Naive thymus-derived CD4-positive, alpha-beta T cell (primary cell): ENCODE measurements at regions of chr2 and their contacts with region 1.

Region 1: DNA sequence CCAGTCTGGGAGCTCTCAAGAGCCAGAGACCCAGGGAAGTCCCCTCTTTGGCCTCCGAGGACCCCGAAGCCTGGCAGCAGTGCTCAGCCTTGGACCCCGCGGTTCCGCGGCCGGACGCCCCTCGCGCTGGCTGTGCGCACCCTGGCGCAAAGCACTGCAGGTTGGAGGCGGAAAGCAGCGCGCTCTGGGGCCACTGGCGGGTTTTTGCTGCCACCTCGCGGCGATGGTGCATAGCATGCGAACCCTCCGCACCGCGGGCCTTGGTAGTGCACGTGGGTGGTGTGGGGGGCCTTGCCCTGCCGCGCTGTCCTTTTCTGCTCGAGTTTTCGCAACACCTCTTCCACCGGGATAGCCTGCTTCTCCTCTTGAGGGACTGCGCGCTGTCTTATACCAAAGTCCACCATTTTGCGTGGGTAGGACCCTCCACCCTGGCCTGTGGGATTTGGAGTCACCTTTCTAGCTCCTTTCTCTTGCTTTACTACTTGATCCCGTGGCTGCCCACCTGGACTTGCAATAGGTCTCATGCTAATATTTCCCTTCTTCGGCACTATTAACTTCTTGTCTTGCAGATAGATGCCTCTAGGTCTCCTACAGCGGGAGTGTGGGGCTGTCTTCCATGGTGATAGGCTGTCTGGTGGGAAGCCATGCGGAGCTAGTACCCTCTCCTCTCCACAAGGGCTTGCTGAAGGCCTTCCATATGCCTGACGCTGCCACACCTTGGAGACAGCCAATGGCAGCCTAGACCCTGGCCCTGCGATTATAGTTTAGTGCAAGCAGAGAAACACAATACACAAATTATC is 14.3 kb downstream of the SIX3 start:
- DNase-seq: peak; percentile 25 to 80 (median 64)
- ATAC-seq: peak; percentile 79
- H3K4me3 ChIP-seq: no peak overlapping the region
- H3K4me3 Mint-ChIP-seq: peak overlapping the region in 7 of 10 donors; percentile 5 to 72 (median 35)
- H3K27ac ChIP-seq: no peak overlapping the region
- H3K27ac Mint-ChIP-seq: peak overlapping the region in 1 of 9 donors; percentile 62
- H3K4me1 ChIP-seq: peaks cover 0 to 10% of the 10 kb centered on the region in 2 donors
- H3K4me1 Mint-ChIP-seq: peaks cover 13 to 32% (median 20%) of the 10 kb centered on the region in 7 donors
- H3K27me3 ChIP-seq: no peaks in the 10 kb centered on the region
- H3K27me3 Mint-ChIP-seq: peaks cover 50 to 77% (median 65%) of the 10 kb centered on the region in 5 donors

Region 2: DNA sequence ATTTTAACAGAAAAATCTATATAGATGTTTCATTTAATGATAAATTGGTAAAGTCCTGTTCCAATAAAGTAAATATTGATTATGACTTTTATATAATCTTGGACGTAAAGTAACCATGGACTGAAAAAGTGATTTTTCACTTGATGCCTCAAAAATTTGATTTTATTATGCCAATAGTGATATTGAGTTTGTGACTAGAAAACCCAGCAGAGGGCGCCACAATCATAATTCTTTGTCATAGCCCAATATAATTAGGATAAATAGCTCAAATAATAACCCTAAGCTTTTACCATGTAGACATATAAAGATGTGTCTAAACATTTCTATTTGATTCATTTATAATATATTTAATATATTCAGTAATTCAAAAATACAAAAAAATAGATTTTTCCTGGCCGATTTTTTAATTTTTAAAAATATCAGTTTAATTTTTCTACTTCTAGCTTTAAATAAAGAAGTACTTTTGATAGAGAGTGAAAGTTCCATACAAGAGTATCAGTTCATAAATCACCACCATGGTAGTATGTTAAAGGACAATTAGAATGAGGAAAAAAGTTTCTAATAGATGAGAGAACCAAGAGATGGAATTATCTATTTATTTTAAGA is 563.4 kb before region 1 on chr2:
- CTCF ChIA-PET with region 1: interaction called, 4 read pairs
- POLR2A ChIA-PET with region 1: no interaction called
- intact Hi-C with region 1: loop called (anchors 1 kb)
- DNase-seq: peak in 7 of 9 donors; percentile 10 to 34 (median 23)
- ATAC-seq: no peak
- H3K4me3 ChIP-seq: no peak overlapping the region
- H3K4me3 Mint-ChIP-seq: no peak overlapping the region
- H3K27ac ChIP-seq: no peak overlapping the region
- H3K27ac Mint-ChIP-seq: no peak overlapping the region
- H3K4me1 ChIP-seq: no peaks in the 10 kb centered on the region
- H3K4me1 Mint-ChIP-seq: peaks cover 0 to 19% (median 10%) of the 10 kb centered on the region in 7 donors
- H3K27me3 ChIP-seq: no peaks in the 10 kb centered on the region
- H3K27me3 Mint-ChIP-seq: no peaks in the 10 kb centered on the region

Region 3: GRCh38 chr2:44560352-44560751 is 395.4 kb before region 1 on chr2:
- CTCF ChIA-PET with region 1: interaction called, 3 read pairs
- POLR2A ChIA-PET with region 1: no interaction called
- intact Hi-C with region 1: loop called in 1 of 2 experiments (anchors 2 kb)
- DNase-seq: no peak
- ATAC-seq: no peak
- H3K4me3 ChIP-seq: no peak overlapping the region
- H3K4me3 Mint-ChIP-seq: no peak overlapping the region
- H3K27ac ChIP-seq: no peak overlapping the region
- H3K27ac Mint-ChIP-seq: no peak overlapping the region
- H3K4me1 ChIP-seq: no peaks in the 10 kb centered on the region
- H3K4me1 Mint-ChIP-seq: peaks cover 0 to 9% (median 6%) of the 10 kb centered on the region in 7 donors
- H3K27me3 ChIP-seq: no peaks in the 10 kb centered on the region
- H3K27me3 Mint-ChIP-seq: no peaks in the 10 kb centered on the region

Region 4: DNA sequence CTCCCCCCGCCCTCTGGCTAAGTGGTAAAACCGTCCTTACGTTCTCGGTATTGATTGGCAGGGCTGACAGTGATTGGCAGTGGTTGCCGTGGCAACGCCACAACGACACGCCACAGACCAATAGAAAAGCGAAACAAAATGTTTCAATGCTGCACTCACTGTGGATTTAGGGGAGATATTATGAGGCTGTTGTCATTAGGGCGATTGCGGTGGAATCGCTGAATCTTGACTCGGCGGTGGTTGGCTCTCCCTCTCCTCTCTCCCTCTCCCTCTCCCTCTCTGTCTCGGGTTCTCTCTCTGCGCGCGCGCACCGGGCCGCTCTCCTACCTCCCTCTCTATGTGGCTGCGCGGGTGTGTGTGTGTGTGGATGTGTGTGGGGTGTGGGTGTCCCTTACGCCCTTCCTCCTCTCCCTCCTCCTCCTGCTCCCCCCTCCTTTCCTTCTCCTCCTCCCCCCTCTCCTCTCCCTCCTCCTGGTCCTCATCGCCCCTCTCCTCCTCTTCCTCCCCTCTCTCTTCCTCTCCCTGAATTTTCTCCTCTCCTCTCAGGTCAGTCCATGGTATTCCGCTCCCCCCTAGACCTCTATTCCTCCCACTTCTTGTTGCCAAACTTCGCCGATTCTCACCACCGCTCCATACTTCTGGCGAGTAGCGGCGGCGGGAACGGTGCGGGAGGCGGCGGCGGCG is 14.1 kb before region 1 on chr2 and contains the start of gene SIX3:
- CTCF ChIA-PET with region 1: interaction called, 4 read pairs
- POLR2A ChIA-PET with region 1: no interaction called
- intact Hi-C with region 1: loop called in 1 of 2 experiments (anchors 2 kb)
- DNase-seq: peak in 4 of 9 donors; percentile 16 to 28 (median 20)
- ATAC-seq: peak; percentile 46
- H3K4me3 ChIP-seq: peak within 1 kb of the TSS; percentile 35
- H3K4me3 Mint-ChIP-seq: peak within 1 kb of the TSS; percentile 75 to 90 (median 80)
- H3K27ac ChIP-seq: no peak within 1 kb of the TSS
- H3K27ac Mint-ChIP-seq: peak within 1 kb of the TSS in 3 of 9 donors; percentile 3 to 62 (median 46)
- H3K4me1 ChIP-seq: no peaks in the 10 kb centered on the region
- H3K4me1 Mint-ChIP-seq: peaks cover 18 to 66% (median 49%) of the 10 kb centered on the region in 7 donors
- H3K27me3 ChIP-seq: peaks cover 0 to 10% of the 10 kb centered on the region in 2 donors
- H3K27me3 Mint-ChIP-seq: peaks cover 53 to 86% (median 73%) of the 10 kb centered on the region in 5 donors
- total RNA-seq, gene SIX3: not detected